ENCODE measurements at regions of chr1 and their contacts with region 1.

Region 1: GRCh38 chr1:42657971-42658879 is at the start of gene PPIH:
- DNase-seq: peak; percentile 93
- H3K4me3 ChIP-seq: peak within 1 kb of the TSS; percentile 55 to 86 (median 72)
- H3K27ac ChIP-seq: peak within 1 kb of the TSS; percentile 14
- H3K4me1 ChIP-seq: peaks cover 14% of the 10 kb centered on the region
- H3K27me3 ChIP-seq: peaks cover 7 to 8% of the 10 kb centered on the region in 2 experiments
- CTCF ChIP-seq: no peak
- POLR2A ChIP-seq: peak; percentile 94
- total RNA-seq, gene PPIH: 49.3 and 52.1 TPM in 2 replicates

Region 2: DNA sequence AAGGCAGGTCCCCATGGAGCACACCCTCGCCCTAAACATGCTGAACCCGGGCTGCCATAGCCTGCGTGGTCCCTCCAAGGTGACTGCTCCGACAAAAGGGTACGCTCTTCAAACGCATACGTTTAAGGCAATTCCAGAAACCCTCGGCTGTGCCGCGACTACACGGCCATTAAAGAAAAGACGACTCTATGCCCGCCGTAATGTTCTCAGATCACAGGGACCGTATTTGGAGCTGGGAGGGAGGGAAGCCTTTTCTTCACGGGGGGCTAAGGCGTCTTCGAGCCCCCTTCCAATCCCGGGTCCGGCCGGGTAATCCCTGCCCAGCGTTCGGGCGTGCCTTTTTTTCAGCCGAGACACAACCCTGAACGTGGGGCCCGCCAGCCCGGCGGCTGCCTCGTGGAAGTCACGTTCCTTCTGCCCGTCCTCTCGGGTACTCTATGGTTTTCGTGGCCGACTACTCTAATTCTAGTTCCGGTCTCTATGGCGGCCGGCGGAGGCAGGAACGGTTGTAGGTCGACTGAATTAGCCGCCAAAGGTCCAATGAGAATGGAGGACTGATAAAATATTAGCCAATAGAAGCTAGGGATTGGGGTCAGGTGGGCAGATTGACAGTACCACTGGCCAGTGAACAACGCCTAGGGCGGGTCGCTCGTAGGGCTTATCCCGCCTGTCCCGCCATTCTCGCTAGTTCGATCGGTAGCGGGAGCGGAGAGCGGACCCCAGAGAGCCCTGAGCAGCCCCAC is 23.7 kb after region 1 on chr1 and contains the start of gene YBX1:
- CTCF ChIA-PET with region 1: interaction called, 5 read pairs
- POLR2A ChIA-PET with region 1: interaction called, 10 read pairs
- dilution Hi-C with region 1: no loop called
- intact Hi-C with region 1: loop called (anchors 1 kb)
- DNase-seq: peak; percentile 99
- H3K4me3 ChIP-seq: peak within 1 kb of the TSS; percentile 76 to 99 (median 95)
- H3K27ac ChIP-seq: peak within 1 kb of the TSS; percentile 72
- H3K4me1 ChIP-seq: peaks cover 41% of the 10 kb centered on the region
- H3K27me3 ChIP-seq: no peaks in the 10 kb centered on the region
- CTCF ChIP-seq: no peak
- POLR2A ChIP-seq: peak; percentile 86
- total RNA-seq, gene YBX1: 783 and 829 TPM in 2 replicates